ENCODE measurements at regions of chr6 and their contacts with region 1.

Region 1: DNA sequence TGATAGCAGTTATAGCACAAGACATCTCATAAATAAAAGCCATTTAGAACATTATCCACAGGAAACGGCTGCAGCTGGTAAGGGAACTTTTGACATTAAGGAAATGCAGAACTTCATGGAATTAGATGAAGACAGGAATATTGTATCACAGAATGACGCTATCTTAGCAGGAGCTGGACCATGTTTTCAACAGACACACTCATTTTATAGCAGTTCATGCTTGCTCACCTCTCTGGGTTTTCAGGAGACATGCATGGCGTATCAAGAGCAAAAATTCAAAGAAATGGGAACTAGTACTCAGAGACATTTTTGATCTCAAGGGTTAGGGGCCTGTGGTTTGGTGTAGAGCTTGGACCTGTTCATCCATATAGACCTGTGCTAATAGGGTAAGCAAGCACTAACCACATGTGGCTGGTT is 125.0 kb downstream of the FYN start:
- DNase-seq: no peak
- H3K4me3 ChIP-seq: no peak overlapping the region
- CTCF ChIP-seq: no peak

Region 2: GRCh38 chr6:111781041-111781708 is 32.9 kb after region 1 on chr6:
- in situ Hi-C with region 1: loop called (anchors 5 kb)
- DNase-seq: no peak
- H3K4me3 ChIP-seq: no peak overlapping the region
- CTCF ChIP-seq: no peak

Region 3: DNA sequence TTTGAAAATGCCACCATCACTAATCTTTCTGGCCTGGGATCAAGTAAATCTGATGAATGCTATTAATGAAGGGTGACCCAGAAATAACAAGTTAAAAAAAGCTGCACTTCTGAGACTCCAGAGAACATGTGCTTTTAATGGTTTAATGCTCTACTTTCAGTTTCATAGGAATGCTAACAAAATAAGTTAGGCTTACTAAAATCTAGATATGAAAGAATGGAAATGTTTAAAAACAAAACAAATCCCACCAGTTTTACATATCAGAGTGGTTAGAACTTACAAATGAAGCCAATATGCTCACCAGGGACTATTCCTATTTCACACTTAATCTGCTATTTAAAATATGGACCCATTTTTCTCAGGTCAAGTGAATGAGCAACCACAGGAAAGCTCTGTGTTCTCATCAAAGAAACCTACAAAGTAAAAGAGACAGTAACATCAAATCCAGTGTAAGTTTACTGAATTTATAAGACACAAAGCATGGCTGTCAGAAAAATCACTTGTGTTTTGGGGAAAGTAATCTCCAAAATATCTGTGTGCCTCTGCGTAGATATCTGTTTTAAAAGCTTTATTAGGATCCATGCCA is 84.7 kb after region 1 on chr6:
- in situ Hi-C with region 1: no loop called
- DNase-seq: no peak
- H3K4me3 ChIP-seq: no peak overlapping the region
- CTCF ChIP-seq: no peak